ENCODE measurements at regions of chr10 and their contacts with region 1.

Region 1: GRCh38 chr10:122565728-122566206 is 5.2 kb downstream of the DMBT1 start:
- DNase-seq: peak; percentile 81

Region 2: GRCh38 chr10:122298598-122299301 is 267.0 kb before region 1 on chr10:
- intact Hi-C with region 1: loop called (anchors 1 kb)
- DNase-seq: no peak

Region 3: DNA sequence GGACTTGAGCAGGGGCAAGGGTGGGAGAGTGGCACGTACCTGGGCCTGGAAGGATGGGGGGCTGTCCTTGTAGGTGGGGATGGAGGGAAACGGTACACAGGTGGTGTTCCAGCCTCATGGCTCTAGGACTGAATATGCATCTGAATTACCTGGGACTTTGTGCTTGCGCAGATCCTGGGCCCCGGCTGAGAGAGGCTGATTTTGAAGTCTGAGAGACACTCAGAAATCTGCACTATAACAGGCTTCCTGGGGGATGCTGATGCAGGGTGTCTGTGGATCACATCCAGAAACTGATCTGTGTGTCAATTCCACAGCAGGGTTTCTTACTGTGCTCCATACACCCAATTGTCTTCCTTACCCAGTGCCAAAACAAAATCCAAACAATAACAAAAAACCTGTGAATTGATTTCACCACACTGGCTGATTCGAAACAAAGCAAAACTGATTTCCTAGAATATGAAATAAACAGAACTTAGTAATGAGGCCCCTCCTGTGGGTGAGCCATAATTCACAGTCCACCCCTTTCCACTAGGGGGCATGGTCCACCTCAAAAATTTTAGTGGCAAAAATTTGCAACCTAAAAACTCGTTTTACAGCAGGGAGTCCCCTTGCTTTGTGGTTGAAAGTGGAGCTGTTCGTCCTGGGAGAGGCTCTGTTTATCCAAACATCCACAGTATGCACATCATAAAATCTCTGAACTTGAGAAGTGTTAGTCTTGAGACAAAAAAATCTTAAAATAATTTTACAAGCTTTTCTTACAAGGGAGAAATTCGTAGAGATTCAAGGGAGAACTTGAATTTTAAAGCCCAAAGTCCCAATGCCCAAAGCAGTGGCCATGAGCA is 223.3 kb before region 1 on chr10:
- intact Hi-C with region 1: loop called (anchors 2 kb)
- DNase-seq: no peak

Region 4: DNA sequence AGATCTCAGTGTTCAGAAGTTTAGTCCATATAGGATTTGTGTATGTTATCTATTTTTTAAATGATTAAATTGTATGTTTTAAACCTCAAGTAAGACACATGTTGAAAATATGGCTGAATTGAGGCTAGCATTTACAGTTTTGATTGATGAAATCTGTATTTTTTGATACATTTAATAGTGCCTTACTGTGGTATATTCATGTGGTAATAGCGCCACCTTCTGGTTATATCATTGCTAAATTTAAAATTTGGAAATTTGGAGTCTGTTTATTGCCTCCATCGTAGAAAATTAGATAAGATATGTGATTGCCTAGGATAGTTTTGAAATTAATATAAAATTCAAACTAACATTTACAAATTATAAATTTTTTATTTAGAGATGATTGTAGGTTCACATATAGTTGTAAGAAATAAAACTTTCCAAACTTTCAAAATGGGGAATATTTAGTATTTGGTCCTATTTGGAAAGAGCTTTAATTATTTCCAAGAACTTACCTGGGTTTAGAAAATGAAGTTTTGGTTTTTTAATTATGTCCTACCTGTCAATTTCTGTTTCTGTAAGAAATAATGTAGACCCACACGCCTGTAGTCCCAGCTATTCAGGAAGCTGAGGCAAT is 130.4 kb before region 1 on chr10:
- intact Hi-C with region 1: loop called (anchors 5 kb)
- DNase-seq: no peak

Region 5: GRCh38 chr10:122521011-122521410 is 44.8 kb before region 1 on chr10:
- intact Hi-C with region 1: loop called (anchors 5 kb)
- DNase-seq: no peak

Region 6: DNA sequence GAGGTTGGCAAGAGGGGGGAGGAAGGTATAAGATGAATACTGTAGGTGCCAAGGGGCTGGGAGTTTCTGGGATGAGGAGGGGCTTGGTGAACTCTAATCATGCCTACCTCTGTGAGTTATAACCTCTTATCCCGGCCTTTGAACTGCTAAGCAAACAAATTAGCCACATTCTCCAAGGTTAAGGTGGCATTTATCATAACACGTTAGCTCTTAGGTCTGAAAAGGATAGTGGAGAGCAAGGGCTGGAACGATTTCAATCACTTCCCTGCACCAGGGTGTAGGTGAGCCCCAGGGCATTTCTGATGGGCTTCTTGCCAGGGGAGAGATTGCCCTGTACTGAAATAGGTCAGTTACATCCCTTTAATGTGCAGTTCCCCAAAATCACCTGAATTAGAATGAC is 33.8 kb before region 1 on chr10:
- intact Hi-C with region 1: no loop called
- DNase-seq: no peak

Region 7: GRCh38 chr10:122703439-122704118 is 137.8 kb after region 1 on chr10:
- intact Hi-C with region 1: loop called (anchors 5 kb)
- DNase-seq: no peak

Measured in cardiac septum (tissue), 1 donor.